SK-N-SH (cell line): ENCODE measurements at regions of chr20 and their contacts with region 1.

Region 1: DNA sequence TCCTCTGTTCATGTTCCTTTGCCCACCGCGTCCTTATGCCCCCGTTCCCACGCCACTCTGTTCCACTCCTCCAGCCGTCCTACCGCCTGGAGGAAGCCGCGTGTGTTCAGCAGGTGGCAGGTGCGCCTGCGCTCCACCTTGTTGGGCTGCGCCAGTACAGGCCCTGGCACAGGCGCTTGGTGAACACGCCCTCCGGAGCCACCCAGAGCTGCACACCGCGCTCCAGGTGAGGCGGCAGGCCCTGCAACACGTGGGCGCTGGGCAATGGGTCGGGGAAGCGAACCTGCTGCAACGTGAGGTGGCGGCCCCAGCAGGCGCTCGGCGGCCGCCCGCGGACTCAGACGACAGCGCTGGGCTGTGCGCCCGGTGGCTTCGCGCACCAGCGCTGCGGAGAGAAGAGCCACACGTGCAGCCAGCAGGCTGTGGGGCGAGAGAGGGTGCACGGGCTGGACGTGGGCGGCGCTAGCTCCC is 4.1 kb upstream of the FOXS1 start:
- DNase-seq: peak; percentile 48
- H3K4me3 ChIP-seq: no peak overlapping the region
- H3K27ac ChIP-seq: no peak overlapping the region
- H3K4me1 ChIP-seq: peaks cover 0 to 4% of the 10 kb centered on the region in 2 experiments; a peak in 2 of 4 replicates
- H3K27me3 ChIP-seq: no peaks in the 10 kb centered on the region; the same call in 1 of the 2 replicates
- CTCF ChIP-seq: no peak
- EP300 ChIP-seq: no peak
- RAD21 ChIP-seq: no peak

Region 2: DNA sequence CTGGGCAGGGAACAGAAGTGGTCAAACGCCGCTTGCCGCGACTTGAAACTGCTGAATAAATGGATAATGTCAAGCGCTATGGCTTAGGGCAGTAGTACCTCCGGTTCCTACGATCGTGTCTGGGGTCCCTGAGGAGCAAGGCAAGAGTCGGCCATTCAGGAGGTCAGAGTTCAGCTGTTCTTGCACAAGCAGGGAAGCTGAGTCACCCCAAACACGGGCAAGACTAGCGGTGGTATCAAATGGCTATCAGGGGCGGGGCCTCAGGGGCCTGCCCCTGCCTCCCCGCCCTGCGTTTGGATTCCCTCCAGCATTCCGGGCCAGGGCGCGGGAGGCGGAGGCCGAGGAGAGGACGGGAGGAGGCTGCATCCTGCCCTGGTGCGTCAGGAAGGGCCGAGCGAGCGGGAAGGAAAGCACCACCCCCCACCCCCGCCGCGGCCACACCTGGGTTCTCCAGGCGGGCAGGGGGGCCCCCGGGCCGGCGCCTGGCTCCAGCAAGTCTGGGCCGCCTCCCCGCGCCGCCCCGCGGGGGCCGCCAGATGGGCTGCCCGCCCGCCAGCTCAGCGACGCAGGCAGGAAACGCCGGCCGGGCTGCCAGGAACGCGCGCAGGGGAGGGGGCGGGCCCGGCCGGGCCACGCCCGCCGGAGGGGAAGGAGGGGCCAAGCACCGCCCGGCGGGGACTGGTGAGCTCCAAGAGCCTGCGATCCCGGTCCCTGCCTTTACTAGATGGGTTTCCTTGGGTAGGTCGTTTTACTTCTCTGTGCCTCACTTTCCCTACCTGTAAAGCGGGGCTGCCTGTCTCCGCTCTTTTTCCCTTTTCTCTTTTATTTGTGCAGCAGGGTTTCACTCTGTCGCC is 276.6 kb before region 1 on chr20:
- CTCF ChIA-PET with region 1: no interaction called
- POLR2A ChIA-PET with region 1: no interaction called
- DNase-seq: peak; percentile 93
- H3K4me3 ChIP-seq: peak overlapping the region; percentile 52 to 59
- H3K27ac ChIP-seq: peak overlapping the region; percentile 93 to 97
- H3K4me1 ChIP-seq: peaks cover 45 to 48% of the 10 kb centered on the region in 2 experiments
- H3K27me3 ChIP-seq: no peaks in the 10 kb centered on the region
- CTCF ChIP-seq: no peak
- EP300 ChIP-seq: peak; percentile 63 to 94
- RAD21 ChIP-seq: no peak; the same call in 1 of the 2 replicates

Region 3: DNA sequence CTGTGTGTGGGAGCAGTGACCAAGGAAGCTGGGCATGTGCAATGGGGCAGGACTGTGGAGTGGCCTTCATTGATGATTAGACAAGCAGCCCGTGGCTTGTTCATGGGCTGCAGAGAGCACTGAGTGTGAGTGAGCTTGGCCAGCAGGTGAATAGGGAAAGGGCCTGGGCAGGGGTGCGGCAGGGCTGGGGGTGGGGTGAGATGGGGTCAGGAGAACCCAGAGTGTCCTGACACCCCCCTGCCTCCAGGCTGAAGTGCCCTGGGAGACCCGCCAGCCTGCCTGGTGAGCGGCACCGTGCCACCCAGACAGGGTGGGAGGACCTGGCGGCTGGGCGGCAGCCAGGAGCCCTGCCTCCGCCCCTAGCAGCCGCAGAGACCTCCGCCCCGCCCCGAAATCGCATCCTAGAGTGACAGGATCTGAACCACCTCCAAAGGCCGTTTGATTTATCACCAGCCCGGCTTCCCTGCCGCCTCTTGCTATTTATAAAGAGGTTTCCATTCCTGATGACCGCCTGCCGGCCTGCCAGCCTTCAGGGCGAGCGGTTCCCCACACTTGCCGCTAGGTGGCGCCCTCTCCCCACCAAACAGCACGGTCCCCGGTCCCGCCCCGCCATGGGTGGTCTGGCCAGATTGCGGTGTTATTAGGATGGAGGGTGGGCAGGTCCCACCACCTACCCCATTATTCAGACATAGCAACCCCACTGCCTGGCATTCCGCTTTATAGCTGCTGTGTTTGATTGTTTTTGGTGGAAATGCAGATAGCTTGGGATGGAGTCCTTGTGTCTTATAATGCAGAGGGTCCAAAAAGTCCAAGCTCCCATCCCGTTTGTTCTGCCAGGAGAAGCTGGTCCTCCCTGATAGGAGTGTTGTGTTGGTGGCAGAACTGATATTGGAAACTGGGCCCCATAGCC is 26.8 kb before region 1 on chr20:
- CTCF ChIA-PET with region 1: interaction called, 174 read pairs
- POLR2A ChIA-PET with region 1: no interaction called
- DNase-seq: peak; percentile 94
- H3K4me3 ChIP-seq: peak overlapping the region; percentile 41 to 70
- H3K27ac ChIP-seq: peak overlapping the region in 1 of 2 experiments; percentile 66; a peak in 2 of 4 replicates
- H3K4me1 ChIP-seq: peaks cover 0 to 8% of the 10 kb centered on the region in 2 experiments; a peak in 1 of 4 replicates
- H3K27me3 ChIP-seq: no peaks in the 10 kb centered on the region
- CTCF ChIP-seq: peak; percentile 98
- EP300 ChIP-seq: no peak
- RAD21 ChIP-seq: peak; percentile 96

Region 4: DNA sequence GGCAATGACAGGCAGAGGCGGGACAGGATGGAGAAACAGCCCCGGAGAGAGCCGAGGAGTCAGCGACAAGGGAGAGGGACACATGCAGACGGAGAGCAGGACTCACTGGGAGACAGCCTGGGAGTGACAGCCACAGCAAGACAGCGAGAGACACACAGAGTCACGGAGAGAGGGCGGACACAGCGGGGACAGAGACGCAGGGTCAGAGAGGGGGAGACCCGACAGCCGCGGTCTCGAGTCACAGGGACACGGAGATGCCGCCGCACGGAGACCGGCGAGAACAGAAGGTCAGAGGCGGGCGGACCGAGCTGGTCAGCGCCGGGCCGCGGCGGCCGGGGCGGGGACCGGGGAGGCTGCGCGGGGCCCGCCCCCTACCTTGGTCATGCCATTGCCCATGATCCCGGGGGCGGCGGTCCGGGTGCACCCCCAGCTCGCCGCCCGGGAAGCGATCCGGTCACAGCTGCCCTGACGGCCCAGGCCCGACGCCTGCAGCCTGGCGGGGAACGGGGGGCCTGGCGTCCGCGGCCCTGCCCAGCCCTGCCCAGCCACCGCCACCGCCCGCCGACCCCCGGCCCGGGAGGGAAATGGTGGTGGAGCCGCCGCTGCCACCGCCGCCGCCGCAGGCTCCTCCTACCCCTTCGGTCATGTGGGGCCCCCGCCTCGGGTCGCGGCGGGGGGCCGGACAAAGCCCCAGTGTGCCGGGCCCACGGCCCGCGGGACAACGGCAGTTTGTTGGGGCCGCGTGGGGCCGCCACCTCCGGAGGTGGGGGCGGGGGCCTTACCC is 20.6 kb after region 1 on chr20 and contains the starts of genes DUSP15 and TTLL9:
- CTCF ChIA-PET with region 1: interaction called, 17 read pairs
- POLR2A ChIA-PET with region 1: no interaction called
- DNase-seq: peak; percentile 90
- H3K4me3 ChIP-seq: peak within 1 kb of the TSS; percentile 66 to 69
- H3K27ac ChIP-seq: peak within 1 kb of the TSS in 1 of 2 experiments; percentile 62; a peak in 1 of 4 replicates
- H3K4me1 ChIP-seq: peaks cover 0 to 23% of the 10 kb centered on the region in 2 experiments; a peak in 1 of 4 replicates
- H3K27me3 ChIP-seq: no peaks in the 10 kb centered on the region
- CTCF ChIP-seq: no peak
- EP300 ChIP-seq: no peak
- RAD21 ChIP-seq: no peak
- polyA plus RNA-seq, gene DUSP15: 4.3 and 5.4 TPM in 2 replicates
- polyA plus RNA-seq, gene TTLL9: 0.23 and 0.32 TPM in 2 replicates

Region 5: GRCh38 chr20:31943052-31943471 is 93.6 kb after region 1 on chr20:
- CTCF ChIA-PET with region 1: interaction called, 27 read pairs
- POLR2A ChIA-PET with region 1: interaction called, 3 read pairs
- DNase-seq: no peak
- H3K4me3 ChIP-seq: no peak overlapping the region
- H3K27ac ChIP-seq: no peak overlapping the region
- H3K4me1 ChIP-seq: no peaks in the 10 kb centered on the region
- H3K27me3 ChIP-seq: no peaks in the 10 kb centered on the region
- CTCF ChIP-seq: no peak
- EP300 ChIP-seq: no peak
- RAD21 ChIP-seq: no peak

Region 6: DNA sequence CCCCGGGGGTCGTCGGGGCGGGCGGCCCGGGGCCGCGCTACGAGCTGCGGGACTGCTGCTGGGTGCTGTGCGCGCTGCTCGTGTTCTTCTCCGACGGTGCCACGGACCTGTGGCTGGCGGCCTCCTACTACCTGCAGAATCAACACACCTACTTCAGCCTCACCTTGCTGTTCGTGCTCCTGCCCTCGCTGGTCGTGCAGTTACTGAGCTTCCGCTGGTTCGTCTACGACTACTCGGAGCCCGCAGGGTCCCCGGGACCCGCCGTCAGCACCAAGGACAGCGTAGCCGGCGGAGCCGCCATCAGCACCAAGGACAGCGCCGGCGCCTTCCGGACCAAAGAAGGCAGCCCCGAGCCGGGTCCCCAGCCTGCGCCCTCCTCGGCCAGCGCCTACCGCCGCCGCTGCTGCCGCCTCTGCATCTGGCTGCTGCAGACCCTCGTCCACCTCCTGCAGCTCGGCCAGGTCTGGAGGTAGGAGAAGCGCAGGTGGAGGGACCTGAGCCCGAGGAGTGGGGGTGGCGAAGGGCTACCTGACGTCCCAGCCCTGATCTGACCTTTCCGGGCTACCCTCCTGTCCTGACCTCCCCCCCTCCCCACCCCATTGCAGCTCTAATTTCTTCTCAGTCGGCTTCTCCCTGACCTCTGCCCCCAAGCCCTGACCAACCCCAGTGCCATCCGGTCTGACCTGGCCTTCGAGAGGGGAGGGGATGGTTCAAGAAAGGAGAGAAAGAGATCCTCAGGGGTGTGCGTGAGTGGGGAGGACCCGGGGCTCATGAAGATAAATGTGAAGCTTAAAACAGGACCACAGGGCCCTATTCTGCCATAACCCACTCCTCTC is 119.0 kb after region 1 on chr20:
- CTCF ChIA-PET with region 1: interaction called, 47 read pairs
- POLR2A ChIA-PET with region 1: no interaction called
- DNase-seq: peak; percentile 81
- H3K4me3 ChIP-seq: peak overlapping the region; percentile 55 to 56; a peak in 3 of 4 replicates
- H3K27ac ChIP-seq: peak overlapping the region in 1 of 2 experiments; percentile 75; a peak in 2 of 4 replicates
- H3K4me1 ChIP-seq: peaks cover 0 to 17% of the 10 kb centered on the region in 2 experiments; a peak in 2 of 4 replicates
- H3K27me3 ChIP-seq: peaks cover 30% of the 10 kb centered on the region
- CTCF ChIP-seq: no peak
- EP300 ChIP-seq: peak in 1 of 2 experiments; percentile 24; a peak in 1 of 4 replicates
- RAD21 ChIP-seq: no peak

Region 7: GRCh38 chr20:32031007-32031958 is 181.8 kb after region 1 on chr20:
- CTCF ChIA-PET with region 1: interaction called, 170 read pairs
- POLR2A ChIA-PET with region 1: interaction called, 3 read pairs
- DNase-seq: peak; percentile 89
- H3K4me3 ChIP-seq: peak overlapping the region; percentile 34 to 87; a peak in 3 of 4 replicates
- H3K27ac ChIP-seq: no peak overlapping the region
- H3K4me1 ChIP-seq: peaks cover 0 to 7% of the 10 kb centered on the region in 2 experiments; a peak in 1 of 4 replicates
- H3K27me3 ChIP-seq: peaks cover 38% of the 10 kb centered on the region
- CTCF ChIP-seq: peak; percentile 98
- EP300 ChIP-seq: no peak
- RAD21 ChIP-seq: peak; percentile 82

Region 8: DNA sequence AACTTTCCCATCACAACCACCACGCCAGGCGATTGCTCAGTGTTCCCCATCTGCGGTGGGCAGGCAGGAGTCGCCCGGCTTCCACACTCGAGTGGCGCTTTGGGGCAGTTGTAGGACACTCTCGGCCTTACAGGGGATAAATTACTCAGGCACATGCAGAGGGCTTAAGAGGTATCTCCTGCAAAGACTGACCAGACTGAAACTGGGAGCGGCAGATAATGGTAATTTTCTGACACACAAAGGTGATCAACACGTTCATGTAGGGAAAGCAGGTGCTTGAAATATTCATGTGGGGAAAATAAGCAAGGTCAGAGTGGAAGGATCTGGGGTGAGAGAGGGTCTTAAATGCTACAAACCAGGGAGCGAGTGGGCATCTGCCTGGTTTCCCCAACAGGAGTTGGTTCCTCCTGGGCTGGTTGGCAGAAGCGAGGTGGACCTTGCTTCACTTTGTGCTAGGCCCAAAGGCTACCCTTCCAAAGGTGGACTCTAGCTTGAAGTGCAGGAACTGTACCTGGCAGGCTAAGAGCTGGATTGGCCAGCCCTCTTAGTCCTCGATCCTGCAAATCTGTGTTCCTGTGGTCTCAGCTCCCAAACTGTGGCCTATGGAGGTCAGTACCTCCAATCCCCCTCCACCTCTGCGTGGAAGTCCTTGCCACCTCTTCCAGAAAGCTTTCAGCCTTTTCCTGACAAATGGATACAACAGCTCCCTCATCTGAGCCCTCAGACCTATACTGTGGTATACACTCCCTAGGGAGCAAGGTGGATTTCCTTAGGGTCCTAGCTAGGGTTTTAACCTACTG is 341.3 kb after region 1 on chr20:
- CTCF ChIA-PET with region 1: no interaction called
- POLR2A ChIA-PET with region 1: no interaction called
- DNase-seq: peak; percentile 37
- H3K4me3 ChIP-seq: peak overlapping the region; percentile 47 to 57
- H3K27ac ChIP-seq: peak overlapping the region; percentile 20 to 65; a peak in 1 of 4 replicates
- H3K4me1 ChIP-seq: peaks cover 0 to 23% of the 10 kb centered on the region in 2 experiments; a peak in 2 of 4 replicates
- H3K27me3 ChIP-seq: no peaks in the 10 kb centered on the region
- CTCF ChIP-seq: no peak
- EP300 ChIP-seq: no peak
- RAD21 ChIP-seq: no peak